HEK293T (cell line): ENCODE measurements at regions of chr11 and their contacts with region 1.

Region 1: DNA sequence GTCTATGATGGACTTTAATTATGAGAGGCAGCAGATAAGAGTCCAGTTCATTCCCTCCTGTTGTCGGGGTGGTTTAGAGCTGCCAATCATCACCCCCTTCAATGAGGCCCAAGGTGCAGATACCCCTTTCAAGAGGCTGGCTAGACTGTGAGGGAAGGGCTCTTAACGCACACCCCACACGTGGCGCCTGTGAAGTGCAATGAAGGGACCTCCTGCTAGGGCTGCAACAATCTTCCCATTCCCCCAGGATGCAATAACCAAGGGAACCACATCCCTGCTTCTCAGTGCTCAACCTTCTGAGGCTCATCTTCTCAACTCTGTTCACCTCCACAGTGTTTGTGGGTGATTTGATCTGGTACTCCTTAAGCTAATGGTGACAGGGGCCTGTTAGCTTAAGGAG is 19.0 kb downstream of the TENM4 start:
- DNase-seq: no peak

Region 2: DNA sequence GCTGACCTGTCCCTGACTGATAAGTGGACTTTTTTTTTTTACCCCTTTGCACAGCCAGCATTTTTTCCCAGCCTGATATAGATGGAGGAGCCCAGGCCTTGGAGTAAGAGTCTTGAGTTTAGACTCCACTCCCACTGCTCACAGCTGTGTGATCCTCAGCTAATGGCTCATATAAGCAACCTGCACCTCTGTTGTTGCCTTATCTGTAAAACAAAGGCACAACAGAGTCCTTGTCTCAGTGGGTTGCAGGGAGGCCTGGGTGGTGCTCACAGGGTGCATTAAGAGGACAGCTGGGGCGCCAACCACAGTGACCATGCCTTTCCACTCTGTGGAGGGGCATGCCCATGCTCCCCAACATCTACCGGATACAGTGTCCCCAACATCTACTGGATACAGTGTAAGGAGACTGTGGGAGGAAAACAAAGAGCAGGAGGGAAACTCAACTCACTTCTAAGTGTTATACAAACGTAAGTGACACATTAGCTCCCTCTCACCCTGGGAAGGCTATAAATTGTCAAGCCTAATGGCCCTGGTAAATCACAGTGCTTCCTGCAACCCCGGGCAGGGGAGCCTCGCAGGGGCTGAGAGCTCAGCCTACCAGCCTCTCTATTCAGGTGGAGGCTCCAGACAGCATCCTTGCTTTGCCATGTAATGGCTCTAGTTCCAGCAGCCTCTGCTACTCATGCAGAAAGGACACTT is 90.5 kb before region 1 on chr11:
- CTCF ChIA-PET with region 1: no interaction called
- POLR2A ChIA-PET with region 1: no interaction called
- DNase-seq: peak; percentile 13

Region 3: DNA sequence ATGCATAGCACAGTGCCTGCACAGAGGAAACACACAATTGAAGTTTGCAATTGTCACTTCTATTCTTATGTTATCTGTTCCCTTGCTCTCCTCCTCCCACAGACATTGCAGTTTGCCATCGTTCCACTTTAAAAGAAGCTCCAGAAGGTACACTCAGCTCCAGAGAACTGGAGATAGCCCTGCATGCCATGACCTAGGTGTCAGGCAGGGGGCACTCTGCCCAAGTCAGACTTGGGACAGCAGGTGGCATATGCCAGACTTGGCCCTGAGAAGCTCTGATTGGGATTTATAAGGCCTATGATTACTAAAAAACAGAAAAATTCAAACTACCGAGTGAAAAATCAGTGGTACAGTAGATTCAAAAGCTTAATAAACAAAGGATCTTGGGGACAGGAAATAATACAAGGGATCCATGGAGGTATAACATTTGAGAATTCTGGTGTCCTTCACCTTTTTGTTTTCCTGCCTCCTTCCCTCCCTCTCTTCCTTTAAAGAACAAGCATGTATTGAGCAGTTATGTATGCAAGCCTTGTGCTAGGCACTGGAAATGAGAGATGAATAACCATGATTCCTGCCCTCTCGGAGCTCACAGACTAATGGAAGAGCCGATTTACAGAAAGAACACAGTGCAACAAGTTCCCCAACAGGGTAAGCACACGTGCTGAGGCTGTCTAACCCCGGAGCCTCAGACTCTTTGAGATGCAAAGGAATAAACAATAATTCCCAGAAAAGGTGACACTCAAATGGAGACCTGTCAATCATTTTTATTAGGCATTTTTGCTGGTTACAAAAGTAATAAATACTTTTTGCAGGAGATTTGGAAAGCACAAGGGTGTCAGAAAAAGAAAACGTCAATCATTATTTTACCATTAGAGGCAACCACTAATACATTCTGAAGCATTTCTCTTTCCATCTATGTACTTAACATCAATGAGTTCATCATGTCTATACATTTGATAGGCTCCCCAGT is 20.8 kb before region 1 on chr11:
- CTCF ChIA-PET with region 1: interaction called, 10 read pairs
- POLR2A ChIA-PET with region 1: no interaction called
- DNase-seq: peak; percentile 55